Activated T-helper 1 cell treated with anti-CD3 and anti-CD28 coated beads, Interleukin-12 subunit alpha, Interleukin-12 subunit beta, Interleukin-2, Interleukin-4 antibody, amounts not matched to agents 30 ng/mL and 10 ng/mL and 1 ng/mL, durations not matched to agents 14 hours and 24 hours and 36 hours (primary cell): ENCODE measurements at regions of chr2 and their contacts with region 1.

Region 1: DNA sequence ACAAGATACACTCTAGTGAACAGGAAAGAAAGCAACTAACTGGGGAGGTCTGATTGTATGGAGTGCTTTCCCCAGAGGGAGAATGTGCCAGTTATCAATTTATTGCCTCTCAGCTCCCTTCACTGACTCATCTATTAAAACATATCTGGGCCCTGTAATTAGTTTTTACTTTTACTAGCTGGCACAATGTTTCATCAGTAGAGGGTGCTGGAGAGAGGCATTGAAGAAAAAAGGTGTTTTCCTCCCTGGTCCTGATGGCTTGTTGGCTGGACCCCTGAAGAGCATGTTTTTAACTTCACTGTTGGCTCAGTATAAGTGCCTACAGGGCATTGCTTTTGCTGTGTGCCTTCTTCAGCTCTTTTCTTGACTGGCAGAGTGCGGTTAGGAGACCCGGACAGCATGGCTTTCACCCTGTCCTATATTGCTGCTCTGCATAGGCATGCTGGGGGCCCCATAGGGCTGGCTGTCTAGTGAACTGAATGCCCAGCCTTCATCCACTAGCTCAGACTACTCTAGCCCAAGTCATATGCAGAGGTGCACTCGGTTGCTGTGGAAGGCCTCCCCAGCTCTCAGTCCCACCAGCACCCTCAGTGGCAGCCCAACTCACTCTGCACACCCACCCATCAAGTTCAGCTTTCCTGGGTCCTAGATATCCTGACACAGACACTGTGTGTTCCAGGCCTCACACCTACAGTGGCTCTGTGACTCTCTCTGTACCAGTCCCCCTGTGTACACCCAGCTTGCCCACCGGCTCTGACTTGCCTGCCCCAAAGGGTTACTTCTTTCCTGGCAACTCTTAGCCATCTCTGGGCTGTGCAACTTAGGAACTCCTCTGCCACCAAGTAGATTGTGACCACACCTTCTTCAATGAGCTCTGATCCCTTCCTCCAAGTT is 62.3 kb upstream of the ACYP2 start:
- DNase-seq: no peak
- H3K4me3 Mint-ChIP-seq: peak overlapping the region; percentile 40
- H3K27ac Mint-ChIP-seq: peak overlapping the region; percentile 64
- H3K4me1 Mint-ChIP-seq: peaks cover 20% of the 10 kb centered on the region
- H3K27me3 Mint-ChIP-seq: no peaks in the 10 kb centered on the region

Region 2: GRCh38 chr2:52844701-52845423 is 1208.2 kb before region 1 on chr2:
- intact Hi-C with region 1: no loop called
- DNase-seq: no peak
- H3K4me3 Mint-ChIP-seq: no peak overlapping the region
- H3K27ac Mint-ChIP-seq: no peak overlapping the region
- H3K4me1 Mint-ChIP-seq: no peaks in the 10 kb centered on the region
- H3K27me3 Mint-ChIP-seq: no peaks in the 10 kb centered on the region

Region 3: GRCh38 chr2:53568469-53568868 is 484.6 kb before region 1 on chr2:
- intact Hi-C with region 1: no loop called
- DNase-seq: no peak
- H3K4me3 Mint-ChIP-seq: no peak overlapping the region
- H3K27ac Mint-ChIP-seq: no peak overlapping the region
- H3K4me1 Mint-ChIP-seq: no peaks in the 10 kb centered on the region
- H3K27me3 Mint-ChIP-seq: peaks cover 3% of the 10 kb centered on the region

Region 4: GRCh38 chr2:53913721-53914120 is 139.4 kb before region 1 on chr2:
- intact Hi-C with region 1: loop called (anchors 5 kb)
- DNase-seq: peak; percentile 15
- H3K4me3 Mint-ChIP-seq: no peak overlapping the region
- H3K27ac Mint-ChIP-seq: peak overlapping the region; percentile 74
- H3K4me1 Mint-ChIP-seq: peaks cover 22% of the 10 kb centered on the region
- H3K27me3 Mint-ChIP-seq: no peaks in the 10 kb centered on the region

Region 5: GRCh38 chr2:53994818-53995808 is 58.0 kb before region 1 on chr2:
- intact Hi-C with region 1: loop called (anchors 1 kb)
- DNase-seq: no peak
- H3K4me3 Mint-ChIP-seq: peak overlapping the region; percentile 43
- H3K27ac Mint-ChIP-seq: peak overlapping the region; percentile 56
- H3K4me1 Mint-ChIP-seq: peaks cover 18% of the 10 kb centered on the region
- H3K27me3 Mint-ChIP-seq: no peaks in the 10 kb centered on the region

Region 6: DNA sequence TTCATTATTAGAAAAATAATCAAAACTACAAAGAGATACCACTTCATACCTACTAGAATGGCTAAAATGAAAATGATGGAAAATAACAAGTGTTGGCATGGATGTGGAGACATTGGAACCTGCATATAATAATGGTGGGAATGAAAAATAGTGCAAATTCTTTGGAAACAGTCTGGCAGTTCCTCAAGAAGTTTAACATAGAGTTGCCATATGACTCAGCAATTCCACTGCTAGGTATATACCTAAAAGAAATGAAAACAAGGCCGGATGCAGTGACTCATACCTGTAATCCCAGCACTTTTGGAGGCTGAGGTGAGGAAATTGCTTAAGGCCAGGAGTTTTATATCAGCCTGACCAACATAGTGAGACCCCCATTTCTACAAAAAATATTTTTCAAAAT is 20.7 kb after region 1 on chr2:
- intact Hi-C with region 1: loop called (anchors 2 kb)
- DNase-seq: no peak
- H3K4me3 Mint-ChIP-seq: no peak overlapping the region
- H3K27ac Mint-ChIP-seq: peak overlapping the region; percentile 55
- H3K4me1 Mint-ChIP-seq: peaks cover 14% of the 10 kb centered on the region
- H3K27me3 Mint-ChIP-seq: no peaks in the 10 kb centered on the region